Posterior vena cava (tissue), 2 donors: ENCODE measurements at regions of chrX and their contacts with region 1.

Region 1: GRCh38 chrX:130190801-130191200 is 19.0 kb downstream of the RAB33A start:
- DNase-seq: no peak

Region 2: DNA sequence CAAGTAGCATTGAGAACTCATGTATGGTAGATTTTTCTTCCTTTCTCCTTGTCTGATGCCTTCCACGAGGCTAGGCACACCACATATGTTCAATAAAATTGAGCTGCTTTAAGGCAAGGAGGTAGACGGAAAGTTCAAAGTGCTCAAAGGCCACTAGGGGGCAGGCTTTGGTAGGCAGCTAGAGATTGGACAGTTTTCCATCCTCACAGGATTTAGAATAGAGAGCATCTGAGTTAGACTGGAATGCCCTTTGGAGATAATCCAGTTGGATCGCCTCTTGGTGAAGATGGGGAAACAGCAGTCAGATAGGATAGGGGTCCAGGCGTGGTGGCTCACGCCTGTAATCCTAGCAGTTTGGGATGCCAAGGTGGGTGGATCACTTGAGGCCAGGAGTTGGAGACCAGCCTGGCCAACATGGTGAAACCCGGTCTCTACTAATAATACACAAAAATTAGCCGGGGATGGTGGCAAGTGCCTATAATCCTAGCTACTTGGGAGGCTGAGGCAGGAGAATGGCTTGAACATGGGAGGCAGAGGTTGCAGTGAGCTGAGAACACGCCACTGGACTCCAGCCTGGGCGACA is 110.9 kb before region 1 on chrX:
- intact Hi-C with region 1: loop called in 1 of 2 experiments (anchors 5 kb)
- DNase-seq: no peak

Region 3: DNA sequence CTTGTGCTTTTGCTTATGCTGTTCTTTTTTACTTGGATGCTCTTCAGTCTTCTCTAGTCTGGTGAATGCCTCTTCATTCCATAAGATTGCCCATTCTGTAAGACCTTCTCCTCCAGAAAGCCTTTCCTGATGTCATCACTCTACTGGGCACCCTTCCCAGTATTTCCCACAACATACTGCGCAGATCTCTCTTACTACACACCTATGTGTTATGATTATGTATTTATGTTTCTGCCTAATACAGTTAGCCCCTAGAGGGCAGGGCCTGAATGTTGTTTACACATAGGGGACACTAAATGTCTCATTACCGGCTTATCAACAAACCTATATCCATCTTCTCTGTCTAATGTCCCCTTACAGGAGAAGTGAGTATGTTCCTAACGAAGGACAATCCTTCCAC is 46.3 kb before region 1 on chrX:
- intact Hi-C with region 1: loop called in 1 of 2 experiments (anchors 1 kb)
- DNase-seq: no peak